Gastrocnemius medialis (tissue), 4 donors: ENCODE measurements at regions of chr18 and their contacts with region 1.

Region 1: GRCh38 chr18:56358608-56359280 is 279.6 kb downstream of the TXNL1 start:
- DNase-seq: no peak
- ATAC-seq: no peak
- H3K4me3 ChIP-seq: no peak overlapping the region
- H3K27ac ChIP-seq: no peak overlapping the region
- H3K4me1 ChIP-seq: no peaks in the 10 kb centered on the region
- H3K27me3 ChIP-seq: no peaks in the 10 kb centered on the region
- CTCF ChIP-seq: no peak
- POLR2A ChIP-seq: no peak

Region 2: DNA sequence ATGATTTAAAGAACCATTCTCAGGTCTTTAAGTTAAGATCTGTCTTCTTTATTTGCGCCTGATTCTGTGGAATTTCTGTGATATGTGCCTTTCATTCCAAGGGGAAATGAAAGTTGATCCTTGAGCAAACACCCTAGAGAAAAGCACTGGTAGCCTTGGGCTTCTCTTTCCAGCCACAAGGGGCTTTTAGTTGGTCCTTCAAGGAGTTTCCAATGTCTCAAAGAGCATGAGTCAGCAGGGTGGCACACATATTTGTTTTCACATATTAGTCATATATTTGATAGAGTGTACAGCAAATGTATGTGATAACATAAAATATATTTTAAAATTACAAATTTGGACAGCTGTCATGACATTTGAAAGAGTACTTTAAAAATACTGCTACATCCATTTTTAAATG is 59.8 kb before region 1 on chr18:
- in situ Hi-C with region 1: loop called in 1 of 4 experiments (anchors 10 kb)
- intact Hi-C with region 1: no loop called
- DNase-seq: no peak
- ATAC-seq: no peak
- H3K4me3 ChIP-seq: no peak overlapping the region
- H3K27ac ChIP-seq: no peak overlapping the region
- H3K4me1 ChIP-seq: no peaks in the 10 kb centered on the region
- H3K27me3 ChIP-seq: no peaks in the 10 kb centered on the region
- CTCF ChIP-seq: no peak
- POLR2A ChIP-seq: no peak

Region 3: GRCh38 chr18:56443166-56443907 is 84.6 kb after region 1 on chr18:
- in situ Hi-C with region 1: no loop called
- intact Hi-C with region 1: no loop called
- DNase-seq: no peak
- ATAC-seq: peak in 1 of 2 donors; percentile 36
- H3K4me3 ChIP-seq: no peak overlapping the region
- H3K27ac ChIP-seq: peak overlapping the region in 2 of 4 donors; percentile 14 to 29
- H3K4me1 ChIP-seq: no peaks in the 10 kb centered on the region
- H3K27me3 ChIP-seq: no peaks in the 10 kb centered on the region
- CTCF ChIP-seq: no peak
- POLR2A ChIP-seq: no peak